ENCODE measurements at regions of chr5 and their contacts with region 1.

Region 1: DNA sequence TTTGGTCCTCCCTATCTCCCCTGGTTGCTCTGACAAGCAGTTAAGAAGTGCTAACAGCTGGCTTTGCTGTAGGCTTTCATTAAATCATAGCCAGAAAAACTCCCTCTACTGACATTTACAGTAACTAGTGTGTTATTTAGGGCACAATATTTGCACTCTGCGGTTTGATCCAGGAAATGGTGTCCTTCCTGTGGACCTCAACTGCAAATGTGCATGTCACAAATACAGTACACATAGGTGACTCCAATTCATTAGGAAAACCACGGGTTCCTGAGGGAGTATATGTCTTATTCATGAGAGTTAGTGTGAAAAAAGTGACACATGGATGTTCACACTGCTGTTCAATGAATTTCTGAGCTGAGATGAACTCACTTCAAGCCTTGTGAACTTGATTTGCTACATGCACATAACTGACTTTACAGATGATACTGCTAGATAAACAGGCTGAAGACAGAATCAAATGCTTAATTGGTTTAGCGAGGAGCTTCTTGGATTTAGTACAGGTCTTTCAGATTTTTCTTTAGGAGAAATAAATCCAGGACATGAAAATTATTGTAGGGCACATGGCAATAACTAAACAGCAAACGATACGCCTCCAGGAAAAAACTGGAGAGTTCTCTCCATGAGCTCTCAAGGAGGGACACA is 281.5 kb downstream of the EFNA5 start:
- DNase-seq: peak; percentile 67
- H3K4me3 Mint-ChIP-seq: peak overlapping the region; percentile 61
- H3K27ac Mint-ChIP-seq: peak overlapping the region; percentile 97
- H3K4me1 Mint-ChIP-seq: peaks cover 64% of the 10 kb centered on the region
- H3K27me3 Mint-ChIP-seq: no peaks in the 10 kb centered on the region
- CTCF ChIP-seq: no peak

Region 2: GRCh38 chr5:107104040-107104995 is 284.9 kb before region 1 on chr5:
- CTCF ChIA-PET with region 1: no interaction called
- intact Hi-C with region 1: loop called (anchors 10 kb)
- DNase-seq: peak; percentile 53
- H3K4me3 Mint-ChIP-seq: no peak overlapping the region
- H3K27ac Mint-ChIP-seq: peak overlapping the region; percentile 25
- H3K4me1 Mint-ChIP-seq: peaks cover 29% of the 10 kb centered on the region
- H3K27me3 Mint-ChIP-seq: no peaks in the 10 kb centered on the region
- CTCF ChIP-seq: peak; percentile 40

Region 3: GRCh38 chr5:107289030-107289714 is 100.1 kb before region 1 on chr5:
- CTCF ChIA-PET with region 1: no interaction called
- intact Hi-C with region 1: loop called (anchors 1 kb)
- DNase-seq: no peak
- H3K4me3 Mint-ChIP-seq: no peak overlapping the region
- H3K27ac Mint-ChIP-seq: peak overlapping the region; percentile 82
- H3K4me1 Mint-ChIP-seq: peaks cover 77% of the 10 kb centered on the region
- H3K27me3 Mint-ChIP-seq: no peaks in the 10 kb centered on the region
- CTCF ChIP-seq: no peak

Region 4: DNA sequence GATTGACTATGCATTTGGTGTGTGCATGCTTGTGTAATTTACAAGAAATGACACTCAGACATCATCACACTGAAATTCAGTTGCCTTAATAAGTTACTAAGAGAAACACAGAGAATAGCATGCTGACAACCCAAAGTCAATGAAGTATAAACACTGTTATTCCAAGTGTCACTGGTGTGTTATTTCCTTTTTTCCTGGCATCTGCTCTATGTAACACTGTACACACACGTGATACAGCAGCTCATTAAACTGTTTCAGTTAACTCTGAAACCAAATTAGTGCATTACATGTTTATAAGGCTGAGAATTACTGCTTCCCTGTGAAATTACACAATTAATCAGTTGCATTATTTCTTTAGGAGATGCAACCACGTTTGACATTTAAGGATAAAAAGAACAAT is 28.8 kb after region 1 on chr5:
- CTCF ChIA-PET with region 1: interaction called, 4 read pairs
- intact Hi-C with region 1: loop called (anchors 2 kb)
- DNase-seq: no peak
- H3K4me3 Mint-ChIP-seq: peak overlapping the region; percentile 13
- H3K27ac Mint-ChIP-seq: peak overlapping the region; percentile 41
- H3K4me1 Mint-ChIP-seq: peaks cover 83% of the 10 kb centered on the region
- H3K27me3 Mint-ChIP-seq: no peaks in the 10 kb centered on the region
- CTCF ChIP-seq: no peak

Region 5: DNA sequence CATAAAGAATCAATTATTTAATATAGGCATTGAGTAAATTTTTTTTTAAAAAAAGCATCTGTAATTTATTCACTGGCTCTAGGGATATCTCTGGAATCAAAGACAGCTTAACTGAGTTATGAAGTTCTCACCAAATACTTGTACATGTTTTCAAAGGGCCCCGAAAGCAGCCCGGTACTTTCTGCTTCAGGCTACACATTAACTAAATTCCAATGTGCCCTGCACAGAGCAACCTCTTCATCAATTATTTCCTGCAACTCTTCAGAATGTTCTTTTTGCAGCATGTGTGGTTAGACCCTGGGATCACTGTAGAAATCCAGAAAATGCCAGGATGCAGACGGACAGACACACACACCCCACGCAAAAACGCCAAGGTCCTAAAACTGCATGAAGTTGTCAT is 72.5 kb after region 1 on chr5:
- CTCF ChIA-PET with region 1: no interaction called
- intact Hi-C with region 1: loop called (anchors 2 kb)
- DNase-seq: no peak
- H3K4me3 Mint-ChIP-seq: peak overlapping the region; percentile 53
- H3K27ac Mint-ChIP-seq: peak overlapping the region; percentile 88
- H3K4me1 Mint-ChIP-seq: peaks cover 96% of the 10 kb centered on the region
- H3K27me3 Mint-ChIP-seq: no peaks in the 10 kb centered on the region
- CTCF ChIP-seq: no peak

Region 6: GRCh38 chr5:107469485-107470294 is 80.4 kb after region 1 on chr5:
- CTCF ChIA-PET with region 1: no interaction called
- intact Hi-C with region 1: loop called (anchors 2 kb)
- DNase-seq: peak; percentile 66
- H3K4me3 Mint-ChIP-seq: peak overlapping the region; percentile 45
- H3K27ac Mint-ChIP-seq: peak overlapping the region; percentile 96
- H3K4me1 Mint-ChIP-seq: peaks cover 95% of the 10 kb centered on the region
- H3K27me3 Mint-ChIP-seq: no peaks in the 10 kb centered on the region
- CTCF ChIP-seq: no peak

Region 7: DNA sequence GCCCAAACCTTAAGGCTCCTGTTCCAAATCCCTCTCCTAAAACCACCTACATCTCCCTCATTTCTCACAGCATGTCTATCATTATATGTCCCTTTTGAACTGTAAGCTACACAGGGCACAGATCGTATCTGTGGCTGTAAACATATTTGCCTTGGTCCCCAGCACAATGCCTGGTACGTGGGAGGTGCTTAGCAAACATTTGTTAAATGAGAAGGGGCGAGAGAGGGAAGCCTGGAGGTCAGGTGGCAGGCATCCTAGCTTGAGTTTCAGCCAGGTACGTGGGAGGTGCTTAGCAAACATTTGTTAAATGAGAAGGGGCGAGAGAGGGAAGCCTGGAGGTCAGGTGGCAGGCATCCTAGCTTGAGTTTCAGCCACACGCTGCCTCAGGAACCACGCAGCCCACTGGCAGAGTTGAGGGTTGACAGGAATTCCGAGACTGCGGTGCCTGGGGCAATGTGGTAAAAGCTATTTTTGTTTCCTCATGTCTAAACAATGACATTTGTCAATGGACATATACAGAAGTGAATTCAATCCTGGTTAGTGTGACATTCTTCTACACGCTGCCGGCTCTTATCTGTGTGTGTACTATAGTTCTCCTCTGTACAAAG is 167.9 kb after region 1 on chr5:
- CTCF ChIA-PET with region 1: interaction called, 3 read pairs
- intact Hi-C with region 1: loop called (anchors 5 kb)
- DNase-seq: peak; percentile 92
- H3K4me3 Mint-ChIP-seq: peak overlapping the region; percentile 45
- H3K27ac Mint-ChIP-seq: peak overlapping the region; percentile 80
- H3K4me1 Mint-ChIP-seq: peaks cover 87% of the 10 kb centered on the region
- H3K27me3 Mint-ChIP-seq: no peaks in the 10 kb centered on the region
- CTCF ChIP-seq: no peak